T-cell (primary cell): ENCODE measurements at regions of chr11 and their contacts with region 1.

Region 1: DNA sequence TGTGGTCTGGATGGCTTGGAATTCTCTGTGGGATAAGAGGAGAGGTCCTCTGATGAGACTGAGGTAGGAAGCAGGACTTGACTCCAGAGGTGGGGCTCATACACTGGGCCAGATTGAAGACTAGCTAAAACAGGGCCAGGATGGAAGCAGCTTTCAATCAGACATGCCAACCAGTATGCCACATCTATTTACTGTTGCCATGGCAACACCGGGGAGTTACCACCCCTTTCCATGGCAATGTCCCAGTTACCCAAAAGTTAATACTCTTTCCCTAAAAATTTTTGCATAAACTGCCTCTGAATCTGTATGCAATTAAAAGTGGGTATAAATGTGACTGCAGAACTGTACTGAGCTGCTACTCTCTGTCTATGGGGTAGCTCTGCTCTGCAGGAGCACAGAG is 247.5 kb upstream of the ZBED5 start:
- DNase-seq: no peak
- ATAC-seq: no peak
- H3K4me3 ChIP-seq: no peak overlapping the region
- H3K4me3 Mint-ChIP-seq: no peak overlapping the region
- H3K27ac ChIP-seq: no peak overlapping the region
- H3K27ac Mint-ChIP-seq: no peak overlapping the region
- H3K4me1 ChIP-seq: peaks cover 0 to 2% of the 10 kb centered on the region in 2 experiments
- H3K4me1 Mint-ChIP-seq: peaks cover 0 to 3% (median 0%) of the 10 kb centered on the region in 3 donors
- H3K27me3 ChIP-seq: no peaks in the 10 kb centered on the region
- H3K27me3 Mint-ChIP-seq: no peaks in the 10 kb centered on the region

Region 2: GRCh38 chr11:11122749-11123148 is 17.4 kb after region 1 on chr11:
- CTCF ChIA-PET with region 1: interaction called in 1 of 2 experiments, 10 read pairs
- POLR2A ChIA-PET with region 1: no interaction called
- DNase-seq: no peak
- ATAC-seq: no peak
- H3K4me3 ChIP-seq: no peak overlapping the region
- H3K4me3 Mint-ChIP-seq: no peak overlapping the region
- H3K27ac ChIP-seq: no peak overlapping the region
- H3K27ac Mint-ChIP-seq: no peak overlapping the region
- H3K4me1 ChIP-seq: no peaks in the 10 kb centered on the region
- H3K4me1 Mint-ChIP-seq: peaks cover 0 to 6% (median 2%) of the 10 kb centered on the region in 3 donors
- H3K27me3 ChIP-seq: no peaks in the 10 kb centered on the region
- H3K27me3 Mint-ChIP-seq: no peaks in the 10 kb centered on the region

Region 3: GRCh38 chr11:11230802-11231562 is 125.6 kb after region 1 on chr11:
- CTCF ChIA-PET with region 1: no interaction called
- POLR2A ChIA-PET with region 1: interaction called in 1 of 2 experiments, 11 read pairs
- DNase-seq: peak in 6 of 35 experiments; percentile 3 to 21 (median 8)
- ATAC-seq: no peak
- H3K4me3 ChIP-seq: no peak overlapping the region
- H3K4me3 Mint-ChIP-seq: no peak overlapping the region
- H3K27ac ChIP-seq: no peak overlapping the region
- H3K27ac Mint-ChIP-seq: no peak overlapping the region
- H3K4me1 ChIP-seq: no peaks in the 10 kb centered on the region
- H3K4me1 Mint-ChIP-seq: no peaks in the 10 kb centered on the region
- H3K27me3 ChIP-seq: peaks cover 0 to 16% of the 10 kb centered on the region in 2 experiments
- H3K27me3 Mint-ChIP-seq: peaks cover 14 to 17% of the 10 kb centered on the region in 2 donors